Activated T-helper 2 cell treated with anti-CD3 and anti-CD28 coated beads, Interferon-gamma antibody, Interleukin-2, Interleukin-4, amounts not matched to agents 10 μg/mL and 5 μg/mL and 100 μg/mL, durations not matched to agents 14 hours and 24 hours and 36 hours (primary cell): ENCODE measurements at regions of chr6 and their contacts with region 1.

Region 1: DNA sequence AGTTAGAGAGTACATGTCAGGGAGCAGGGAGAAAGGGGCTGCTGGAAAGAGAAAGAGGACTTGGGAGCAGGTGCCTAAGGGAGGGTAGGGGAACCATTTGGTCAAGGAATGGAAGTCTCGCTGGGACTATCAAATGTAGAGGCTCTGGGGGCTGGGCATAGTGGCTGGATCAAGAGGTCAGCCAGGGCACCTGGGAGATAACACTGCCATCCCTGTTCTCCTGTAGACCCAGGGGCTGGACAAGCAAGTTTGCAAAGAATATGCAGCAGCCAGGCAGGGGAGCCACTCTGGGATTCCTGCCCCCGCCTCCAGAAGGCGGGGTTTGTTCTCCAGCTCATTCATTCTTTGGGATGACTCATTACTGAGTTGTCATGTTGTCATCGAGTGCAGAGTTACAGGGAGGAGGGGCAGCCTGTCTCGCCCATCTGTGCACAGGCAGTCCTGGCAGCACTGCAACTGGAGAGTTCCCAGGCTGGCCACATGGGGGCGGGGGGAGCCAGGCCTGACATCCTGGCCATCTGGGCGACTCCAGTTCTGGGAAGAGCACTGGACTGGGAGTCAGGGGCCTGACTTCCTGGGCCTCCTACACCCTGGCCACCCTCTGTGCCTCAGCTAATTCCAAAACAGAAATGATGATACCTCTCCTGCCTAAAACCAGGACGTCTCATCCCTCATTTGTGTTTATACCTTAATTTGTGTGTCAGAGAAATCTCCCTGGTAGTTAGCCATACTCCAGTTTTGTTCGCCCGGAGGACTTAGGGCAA is 28.2 kb upstream of the ZFAND3 start:
- DNase-seq: peak; percentile 68
- H3K4me3 Mint-ChIP-seq: no peak overlapping the region
- H3K27ac Mint-ChIP-seq: no peak overlapping the region
- H3K4me1 Mint-ChIP-seq: peaks cover 11% of the 10 kb centered on the region
- H3K27me3 Mint-ChIP-seq: peaks cover 8% of the 10 kb centered on the region

Region 2: DNA sequence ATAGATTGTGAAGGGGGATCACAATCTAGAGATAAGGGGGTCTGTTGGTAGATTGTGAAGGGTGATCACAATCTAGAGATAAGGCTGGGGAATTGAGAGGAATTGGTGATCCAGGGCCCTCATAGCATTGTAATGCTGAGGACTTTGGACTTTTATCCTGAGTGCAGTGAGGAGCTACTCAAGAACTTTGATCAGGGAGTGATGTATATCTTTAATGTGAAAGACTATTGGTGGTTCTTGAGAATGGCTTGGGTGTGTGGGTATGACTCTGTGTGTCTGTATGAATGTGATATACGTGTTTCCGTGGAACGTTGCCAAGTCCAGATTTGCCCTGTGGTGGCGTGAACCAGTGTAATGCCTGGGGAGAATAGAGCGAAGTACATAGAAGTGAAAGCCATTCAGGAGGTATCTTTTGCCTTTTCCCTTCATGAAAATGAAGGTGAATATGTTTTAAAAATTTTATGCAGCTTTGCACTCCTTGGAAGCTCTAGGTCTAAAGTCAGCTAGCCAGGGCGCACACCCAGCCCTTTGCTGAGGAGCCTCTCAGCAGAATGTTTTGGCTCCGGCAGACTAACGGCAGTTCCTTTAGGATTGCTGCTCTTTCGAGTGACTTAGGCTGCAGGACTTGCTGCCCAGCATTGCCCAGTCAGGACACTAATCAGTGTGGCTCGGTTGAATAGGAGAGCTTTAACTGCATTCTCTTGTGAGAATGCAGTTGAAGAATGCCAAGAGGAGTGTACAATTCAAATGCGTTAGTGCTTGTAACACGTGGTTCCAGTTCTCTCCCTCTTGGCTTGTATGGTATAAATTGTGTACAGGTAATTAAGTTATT is 31.7 kb after region 1 on chr6:
- intact Hi-C with region 1: no loop called
- DNase-seq: no peak
- H3K4me3 Mint-ChIP-seq: no peak overlapping the region
- H3K27ac Mint-ChIP-seq: no peak overlapping the region
- H3K4me1 Mint-ChIP-seq: peaks cover 54% of the 10 kb centered on the region
- H3K27me3 Mint-ChIP-seq: no peaks in the 10 kb centered on the region

Region 3: DNA sequence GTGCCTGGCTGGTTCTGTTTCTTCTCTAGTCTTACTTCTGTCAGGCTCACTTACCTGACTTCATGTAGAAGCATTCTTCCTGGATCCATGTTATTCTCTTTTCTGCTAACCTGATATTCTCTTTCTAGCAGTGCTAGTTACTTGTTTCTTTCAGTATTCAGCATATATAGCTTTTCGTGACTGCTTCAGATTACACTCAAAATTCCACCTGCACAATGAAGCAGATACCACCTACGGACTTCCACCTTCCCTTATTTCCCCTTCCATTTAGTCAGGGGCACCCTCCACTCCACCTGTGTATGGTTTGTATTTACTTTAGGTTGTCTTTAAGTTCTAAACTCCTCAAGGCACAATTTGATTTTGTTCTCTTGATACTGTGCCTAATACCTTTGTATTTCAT is 64.9 kb after region 1 on chr6:
- intact Hi-C with region 1: no loop called
- DNase-seq: no peak
- H3K4me3 Mint-ChIP-seq: no peak overlapping the region
- H3K27ac Mint-ChIP-seq: no peak overlapping the region
- H3K4me1 Mint-ChIP-seq: peaks cover 27% of the 10 kb centered on the region
- H3K27me3 Mint-ChIP-seq: no peaks in the 10 kb centered on the region

Region 4: GRCh38 chr6:37867756-37868446 is 76.6 kb after region 1 on chr6:
- intact Hi-C with region 1: loop called (anchors 2 kb)
- DNase-seq: no peak
- H3K4me3 Mint-ChIP-seq: no peak overlapping the region
- H3K27ac Mint-ChIP-seq: peak overlapping the region; percentile 74
- H3K4me1 Mint-ChIP-seq: peaks cover 45% of the 10 kb centered on the region
- H3K27me3 Mint-ChIP-seq: no peaks in the 10 kb centered on the region

Region 5: DNA sequence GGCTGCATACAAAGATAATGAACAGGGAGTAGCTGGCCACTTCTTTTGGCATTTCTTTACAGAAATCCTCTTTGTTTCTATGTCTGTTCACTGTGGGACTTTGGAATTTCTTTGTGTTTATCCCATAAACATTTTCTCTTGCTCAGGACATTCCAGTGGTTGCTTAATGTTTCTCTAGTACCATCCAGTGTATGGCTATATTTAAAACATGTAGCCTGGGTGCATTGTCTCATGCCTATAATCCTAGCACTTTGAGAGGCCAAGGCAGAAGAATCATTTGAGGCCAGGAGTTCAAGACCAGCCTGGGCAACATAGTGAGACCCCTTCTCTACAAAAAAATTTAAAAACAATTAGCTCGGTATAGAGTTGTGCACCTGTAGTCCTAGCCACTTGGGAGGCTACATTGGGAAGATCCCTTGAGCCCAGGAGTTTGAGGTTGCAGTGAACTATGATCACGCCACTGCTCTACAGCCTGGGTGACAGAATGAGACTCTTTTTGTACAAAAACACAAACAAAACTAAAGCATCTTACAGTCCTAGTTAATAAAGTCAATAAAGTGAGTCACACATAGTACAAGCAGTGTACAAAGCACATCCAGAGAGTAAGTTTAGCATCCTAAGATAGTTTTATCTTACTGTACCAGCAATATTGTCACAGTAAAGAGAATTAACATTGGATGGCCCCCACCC is 91.5 kb after region 1 on chr6:
- intact Hi-C with region 1: no loop called
- DNase-seq: no peak
- H3K4me3 Mint-ChIP-seq: no peak overlapping the region
- H3K27ac Mint-ChIP-seq: no peak overlapping the region
- H3K4me1 Mint-ChIP-seq: peaks cover 2% of the 10 kb centered on the region
- H3K27me3 Mint-ChIP-seq: no peaks in the 10 kb centered on the region

Region 6: DNA sequence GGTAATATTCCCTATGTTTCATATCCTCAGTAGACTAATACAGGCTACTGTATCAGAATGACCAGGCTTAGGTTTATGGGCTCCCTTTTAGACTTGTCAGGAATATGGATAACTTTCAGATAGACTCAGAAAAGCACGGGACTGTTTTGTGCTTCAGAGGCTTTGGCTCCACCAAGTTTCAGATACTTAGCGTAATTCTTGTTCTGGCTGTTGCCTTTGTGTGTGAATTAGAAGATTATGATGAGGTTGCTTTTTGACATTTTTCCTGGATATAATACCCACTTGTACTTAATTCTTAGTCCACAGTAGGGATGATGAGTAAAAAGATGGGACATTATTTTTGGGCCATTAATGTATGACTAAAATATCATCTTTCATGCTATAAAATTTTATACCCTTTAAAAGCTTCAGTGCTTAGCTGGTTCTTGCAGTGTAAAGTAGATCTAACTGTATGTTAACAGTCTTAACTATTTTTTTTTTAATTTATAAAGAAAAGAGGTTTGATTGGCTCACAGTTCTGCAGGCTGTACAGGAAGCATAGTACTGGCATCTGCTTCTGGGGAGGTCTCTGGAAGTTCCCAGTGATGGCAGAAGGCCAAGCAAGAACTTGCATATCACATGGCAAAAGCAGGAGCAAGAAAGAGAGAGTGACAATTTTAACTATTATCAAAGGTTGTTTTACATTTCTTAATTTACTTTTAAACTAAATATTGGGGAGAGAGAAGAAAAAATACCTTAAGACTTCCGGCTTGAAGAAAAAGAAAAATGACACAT is 148.9 kb after region 1 on chr6:
- intact Hi-C with region 1: no loop called
- DNase-seq: no peak
- H3K4me3 Mint-ChIP-seq: no peak overlapping the region
- H3K27ac Mint-ChIP-seq: no peak overlapping the region
- H3K4me1 Mint-ChIP-seq: peaks cover 38% of the 10 kb centered on the region
- H3K27me3 Mint-ChIP-seq: no peaks in the 10 kb centered on the region

Region 7: GRCh38 chr6:38012573-38012972 is 221.2 kb after region 1 on chr6:
- intact Hi-C with region 1: loop called (anchors 5 kb)
- DNase-seq: no peak
- H3K4me3 Mint-ChIP-seq: no peak overlapping the region
- H3K27ac Mint-ChIP-seq: no peak overlapping the region
- H3K4me1 Mint-ChIP-seq: peaks cover 3% of the 10 kb centered on the region
- H3K27me3 Mint-ChIP-seq: no peaks in the 10 kb centered on the region